Activated CD4-positive, alpha-beta T cell treated with anti-CD3 and anti-CD28 coated beads, Interleukin-2, amount 10 ng/mL, durations not matched to agents 24 days and 14 days (primary cell): ENCODE measurements at regions of chr12 and their contacts with region 1.

Region 1: DNA sequence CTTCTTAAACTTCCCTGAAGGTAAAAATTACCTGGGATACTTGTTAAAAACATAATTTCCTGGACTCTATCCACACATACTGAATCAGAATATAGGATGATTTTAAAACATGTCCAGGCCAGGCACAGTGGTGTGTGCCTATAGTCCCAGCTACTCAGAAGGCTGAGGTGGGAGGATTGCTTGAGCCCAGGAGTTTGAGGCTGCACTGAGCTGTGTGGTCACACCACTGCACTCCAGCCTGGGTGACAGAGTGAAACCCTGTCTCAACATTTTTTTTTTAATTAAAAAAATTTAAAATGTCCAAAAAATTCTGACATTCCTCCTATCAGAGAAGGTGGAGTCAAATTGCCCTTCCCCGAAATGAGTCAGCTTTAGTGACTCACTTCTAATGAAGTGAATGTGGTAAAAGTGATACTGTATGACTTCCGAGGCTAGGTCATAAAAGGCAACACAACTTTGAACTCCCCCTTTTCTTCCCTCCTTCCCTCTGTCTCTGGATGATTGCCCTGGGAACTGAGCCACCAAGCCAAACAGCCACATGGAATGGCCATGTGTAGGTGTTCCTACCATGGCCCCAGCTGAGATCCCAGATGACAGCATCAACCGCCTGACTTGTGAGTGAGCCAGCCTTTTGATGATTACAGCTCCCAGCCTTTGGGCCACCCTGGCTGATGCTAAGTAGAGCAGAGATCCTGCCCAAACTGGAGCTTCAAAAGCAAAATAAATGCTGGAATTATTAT is 36.3 kb downstream of the LIMA1 start:
- DNase-seq: peak; percentile 73
- H3K4me3 Mint-ChIP-seq: peak overlapping the region; percentile 66
- H3K27ac Mint-ChIP-seq: peak overlapping the region; percentile 86
- H3K4me1 Mint-ChIP-seq: peaks cover 34% of the 10 kb centered on the region
- H3K27me3 Mint-ChIP-seq: no peaks in the 10 kb centered on the region

Region 2: GRCh38 chr12:50111693-50112455 is 135.2 kb before region 1 on chr12 and contains the start of gene COX14:
- intact Hi-C with region 1: no loop called
- DNase-seq: peak; percentile 100
- H3K4me3 Mint-ChIP-seq: peak within 1 kb of the TSS; percentile 95
- H3K27ac Mint-ChIP-seq: peak within 1 kb of the TSS; percentile 96
- H3K4me1 Mint-ChIP-seq: peaks cover 32% of the 10 kb centered on the region
- H3K27me3 Mint-ChIP-seq: no peaks in the 10 kb centered on the region
- total RNA-seq, gene COX14: 44.0 and 45.0 TPM in 2 replicates

Region 3: DNA sequence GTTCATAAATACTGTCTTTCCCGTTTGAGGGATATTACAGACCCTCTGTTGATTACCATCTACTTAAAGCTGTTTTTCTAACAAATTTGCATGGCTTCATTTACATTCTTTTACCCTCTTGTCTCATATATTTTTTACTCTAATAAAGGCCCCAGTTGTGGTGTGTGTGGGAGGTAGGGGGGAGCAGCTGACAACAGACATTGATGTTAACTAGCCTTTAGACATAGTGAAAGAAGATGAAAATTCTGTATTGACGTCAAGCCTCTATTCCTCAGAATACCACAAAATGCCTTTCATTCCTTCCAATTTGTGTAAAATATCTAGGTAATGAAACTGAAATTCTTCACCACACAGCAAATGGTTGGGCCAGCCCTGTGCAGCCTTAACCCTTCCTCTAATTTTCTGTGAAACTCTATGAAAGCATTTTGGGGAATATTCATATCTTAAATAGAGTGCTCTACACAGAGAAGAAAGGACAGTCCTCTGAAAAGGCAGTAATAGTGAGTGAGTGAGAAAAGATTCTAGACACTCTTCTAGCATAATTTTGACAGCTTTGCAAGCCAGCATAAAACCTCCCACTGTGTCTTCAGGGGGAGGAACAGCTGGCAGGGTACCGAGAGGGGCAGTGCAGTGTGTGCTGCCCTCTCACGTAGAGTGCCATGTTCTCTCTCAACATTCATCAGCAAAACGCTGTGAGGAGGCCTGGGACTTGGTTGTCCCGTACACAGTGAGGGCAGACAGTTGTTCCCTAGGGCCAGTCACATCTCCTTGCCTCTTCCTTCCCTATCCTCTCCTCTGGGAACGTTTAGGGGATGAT is 59.8 kb before region 1 on chr12:
- intact Hi-C with region 1: loop called (anchors 2 kb)
- DNase-seq: peak; percentile 74
- H3K4me3 Mint-ChIP-seq: peak overlapping the region; percentile 72
- H3K27ac Mint-ChIP-seq: peak overlapping the region; percentile 95
- H3K4me1 Mint-ChIP-seq: peaks cover 54% of the 10 kb centered on the region
- H3K27me3 Mint-ChIP-seq: no peaks in the 10 kb centered on the region

Region 4: GRCh38 chr12:50297027-50297426 is 50.0 kb after region 1 on chr12:
- intact Hi-C with region 1: no loop called
- DNase-seq: no peak
- H3K4me3 Mint-ChIP-seq: no peak overlapping the region
- H3K27ac Mint-ChIP-seq: no peak overlapping the region
- H3K4me1 Mint-ChIP-seq: peaks cover 5% of the 10 kb centered on the region
- H3K27me3 Mint-ChIP-seq: no peaks in the 10 kb centered on the region